Activated naive CD8-positive, alpha-beta T cell treated with anti-CD3 and anti-CD28 coated beads, Interleukin-2, amount 10 ng/mL, durations not matched to agents 7 days and 5 days (primary cell): ENCODE measurements at regions of chr6 and their contacts with region 1.

Region 1: GRCh38 chr6:99425647-99426453 is 742 bp upstream of the PNISR start:
- DNase-seq: peak; percentile 68
- ATAC-seq: peak; percentile 57
- H3K4me3 Mint-ChIP-seq: peak overlapping the region; percentile 99
- H3K27ac Mint-ChIP-seq: peak overlapping the region; percentile 99
- H3K4me1 Mint-ChIP-seq: peaks cover 50% of the 10 kb centered on the region
- H3K27me3 Mint-ChIP-seq: no peaks in the 10 kb centered on the region

Region 2: DNA sequence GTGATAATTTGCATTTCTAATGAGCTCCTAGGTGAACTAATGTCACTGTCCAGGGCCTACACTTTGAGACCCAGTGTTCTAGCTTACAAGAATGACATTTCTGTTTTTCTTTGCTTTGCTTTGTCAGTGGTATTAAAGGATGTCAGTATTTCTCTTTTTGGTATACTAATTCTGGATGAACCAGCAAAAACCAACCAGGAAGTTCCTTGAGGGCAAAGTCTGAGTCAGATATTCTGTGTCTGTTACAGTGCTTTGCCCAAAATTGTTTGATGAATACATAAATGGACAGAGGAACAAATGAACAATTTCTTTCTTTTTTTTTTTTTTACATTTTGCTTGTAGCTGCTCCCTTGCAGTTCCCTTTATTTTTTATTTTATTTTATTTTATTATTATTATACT is 47.2 kb before region 1 on chr6:
- POLR2A ChIA-PET with region 1: no interaction called
- DNase-seq: no peak
- ATAC-seq: no peak
- H3K4me3 Mint-ChIP-seq: no peak overlapping the region
- H3K27ac Mint-ChIP-seq: no peak overlapping the region
- H3K4me1 Mint-ChIP-seq: peaks cover 2% of the 10 kb centered on the region
- H3K27me3 Mint-ChIP-seq: no peaks in the 10 kb centered on the region

Region 3: DNA sequence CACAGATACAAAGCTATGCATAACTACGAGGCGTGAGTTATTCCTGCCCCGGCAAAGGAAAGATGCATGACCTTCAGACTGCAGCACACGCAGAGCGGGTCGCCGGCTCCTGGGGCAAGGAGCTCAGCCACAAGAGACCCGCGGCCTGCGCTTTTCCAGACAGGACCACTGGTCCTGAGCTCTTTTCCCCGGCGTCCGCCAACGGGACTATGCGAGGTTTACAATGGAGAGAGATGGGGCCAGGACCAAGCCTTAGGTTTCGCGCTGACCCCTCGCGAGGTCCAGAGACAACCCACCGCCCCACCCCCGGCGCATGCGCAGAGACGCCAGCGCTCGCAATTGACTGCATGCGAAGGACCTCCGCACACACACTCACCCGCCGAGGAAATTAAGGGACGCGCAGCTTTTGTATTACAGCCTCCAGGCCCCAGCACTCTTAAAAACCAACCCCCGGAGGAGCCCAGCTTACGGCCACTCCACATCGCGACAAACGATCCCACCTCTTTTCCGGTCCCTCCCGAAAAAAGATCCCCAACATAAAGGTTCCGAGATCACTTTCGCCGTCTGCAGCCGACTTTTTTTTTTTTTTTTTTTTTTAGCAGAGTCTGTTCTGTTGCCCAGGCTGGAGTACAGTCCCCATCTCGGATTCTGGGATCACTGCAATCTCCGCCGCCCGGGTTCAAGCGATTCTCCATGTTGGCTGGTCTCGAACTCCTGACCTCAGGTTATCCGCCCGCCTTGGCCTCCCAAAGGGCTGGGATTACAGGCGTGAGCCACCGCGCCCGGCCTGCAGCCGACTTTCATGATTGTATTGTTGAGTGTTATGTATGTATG is 31.9 kb before region 1 on chr6 and contains the start of gene COQ3:
- POLR2A ChIA-PET with region 1: interaction called, 11 read pairs
- DNase-seq: peak; percentile 78
- ATAC-seq: peak; percentile 79
- H3K4me3 Mint-ChIP-seq: peak within 1 kb of the TSS; percentile 89
- H3K27ac Mint-ChIP-seq: peak within 1 kb of the TSS; percentile 84
- H3K4me1 Mint-ChIP-seq: peaks cover 9% of the 10 kb centered on the region
- H3K27me3 Mint-ChIP-seq: no peaks in the 10 kb centered on the region
- total RNA-seq, gene COQ3: 7.9 to 10.1 TPM

Region 4: GRCh38 chr6:99588618-99589289 is 162.9 kb after region 1 on chr6:
- POLR2A ChIA-PET with region 1: no interaction called
- DNase-seq: peak; percentile 70
- ATAC-seq: peak; percentile 90
- H3K4me3 Mint-ChIP-seq: peak overlapping the region; percentile 82
- H3K27ac Mint-ChIP-seq: no peak overlapping the region
- H3K4me1 Mint-ChIP-seq: peaks cover 23% of the 10 kb centered on the region
- H3K27me3 Mint-ChIP-seq: peaks cover 84% of the 10 kb centered on the region